Activated T-helper 1 cell treated with anti-CD3 and anti-CD28 coated beads, Interleukin-12 subunit alpha, Interleukin-12 subunit beta, Interleukin-2, Interleukin-4 antibody, amounts not matched to agents 30 ng/mL and 10 ng/mL and 1 ng/mL, durations not matched to agents 14 hours and 24 hours and 36 hours (primary cell): ENCODE measurements at regions of chr2 and their contacts with region 1.

Region 1: GRCh38 chr2:233854241-233854981 is at the start of gene HJURP:
- DNase-seq: peak; percentile 95
- H3K4me3 Mint-ChIP-seq: peak within 1 kb of the TSS; percentile 94
- H3K27ac Mint-ChIP-seq: peak within 1 kb of the TSS; percentile 97
- H3K4me1 Mint-ChIP-seq: peaks cover 63% of the 10 kb centered on the region
- H3K27me3 Mint-ChIP-seq: no peaks in the 10 kb centered on the region
- total RNA-seq, gene HJURP: 38.2 and 40.4 TPM in 2 replicates

Region 2: GRCh38 chr2:232550354-232551249 is 1303.8 kb before region 1 on chr2 and contains the starts of genes EIF4E2 and TIGD1:
- intact Hi-C with region 1: loop called (anchors 10 kb)
- DNase-seq: peak; percentile 90
- H3K4me3 Mint-ChIP-seq: peak within 1 kb of the TSS; percentile 100
- H3K27ac Mint-ChIP-seq: peak within 1 kb of the TSS; percentile 100
- H3K4me1 Mint-ChIP-seq: peaks cover 76% of the 10 kb centered on the region
- H3K27me3 Mint-ChIP-seq: no peaks in the 10 kb centered on the region
- total RNA-seq, gene EIF4E2: 94.3 and 96.2 TPM in 2 replicates
- total RNA-seq, gene TIGD1: 8.4 and 8.9 TPM in 2 replicates

Region 3: DNA sequence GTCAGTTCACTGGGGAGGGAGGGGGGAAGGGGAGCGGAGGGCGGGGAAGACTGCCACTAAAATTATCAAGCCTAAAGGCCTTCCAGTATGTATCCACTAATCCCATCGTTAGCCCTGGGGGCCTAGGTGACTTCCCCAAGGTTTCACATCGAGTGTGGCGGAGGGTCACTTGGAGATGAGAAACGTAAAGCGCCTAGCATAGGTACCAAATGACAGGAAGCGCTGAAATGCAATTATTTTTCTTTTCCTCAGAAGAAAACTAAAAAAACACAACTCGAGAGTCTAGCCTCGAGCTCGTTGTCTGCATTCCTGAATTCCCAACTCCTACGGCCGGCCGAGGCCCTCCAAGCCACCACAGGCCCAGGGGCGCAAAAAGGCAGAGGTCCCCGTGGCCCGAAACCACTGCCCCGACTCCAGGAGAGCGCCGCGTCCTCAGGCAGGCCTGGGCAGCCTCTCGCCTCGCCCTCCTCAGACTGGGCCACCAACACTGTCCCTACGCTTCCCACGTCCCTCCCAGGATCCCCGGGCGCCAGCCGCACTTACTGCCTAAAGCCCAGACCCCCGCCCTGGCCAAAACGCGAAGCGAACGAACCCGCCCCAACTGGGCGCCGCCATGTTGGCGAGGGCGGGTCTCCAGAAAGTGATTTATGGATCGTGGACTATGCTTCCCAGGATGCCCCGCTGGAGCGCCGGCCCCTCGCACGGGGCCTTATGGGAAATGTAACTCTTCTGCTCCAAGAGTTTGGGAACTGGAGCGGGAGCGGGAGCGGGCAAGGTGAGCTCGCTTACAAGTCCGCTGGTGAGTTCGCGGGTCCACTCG is 288.1 kb before region 1 on chr2 and contains the start of gene USP40:
- intact Hi-C with region 1: loop called (anchors 5 kb)
- DNase-seq: peak; percentile 37
- H3K4me3 Mint-ChIP-seq: peak within 1 kb of the TSS; percentile 94
- H3K27ac Mint-ChIP-seq: peak within 1 kb of the TSS; percentile 93
- H3K4me1 Mint-ChIP-seq: peaks cover 19% of the 10 kb centered on the region
- H3K27me3 Mint-ChIP-seq: peaks cover 20% of the 10 kb centered on the region
- total RNA-seq, gene USP40: 10.1 and 11.2 TPM in 2 replicates

Region 4: GRCh38 chr2:233990261-233990798 is 135.9 kb after region 1 on chr2:
- intact Hi-C with region 1: loop called (anchors 5 kb)
- DNase-seq: peak; percentile 69
- H3K4me3 Mint-ChIP-seq: peak overlapping the region; percentile 38
- H3K27ac Mint-ChIP-seq: no peak overlapping the region
- H3K4me1 Mint-ChIP-seq: peaks cover 49% of the 10 kb centered on the region
- H3K27me3 Mint-ChIP-seq: peaks cover 27% of the 10 kb centered on the region

Region 5: DNA sequence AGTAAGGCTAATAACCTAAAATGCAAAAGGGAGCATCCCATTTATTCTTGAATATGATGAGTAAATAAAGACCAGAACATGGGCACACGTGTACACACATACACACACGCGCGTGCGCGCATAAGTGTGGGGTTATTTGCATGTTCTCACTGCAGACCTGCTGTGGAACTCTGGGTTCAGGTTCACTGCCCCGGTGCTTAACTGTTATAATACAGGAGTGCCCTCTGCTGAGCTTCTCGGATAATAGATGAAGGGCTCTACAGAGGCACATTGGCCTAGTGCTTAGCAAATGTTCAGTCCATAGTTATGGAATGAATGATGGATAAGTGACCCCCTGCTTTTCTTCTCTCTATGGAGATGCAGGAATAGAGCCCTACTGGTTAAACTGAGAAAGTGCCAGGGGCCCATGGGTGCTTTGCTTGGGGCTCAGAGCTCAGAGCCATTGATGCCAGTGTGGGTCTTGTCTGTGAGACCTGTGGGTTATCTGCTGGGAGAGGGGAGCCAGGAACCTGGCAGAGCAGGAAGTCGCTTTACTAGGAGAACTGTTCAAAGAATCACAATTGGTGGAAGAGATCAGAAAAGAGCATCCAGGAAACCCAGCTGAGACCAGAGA is 646.1 kb after region 1 on chr2:
- intact Hi-C with region 1: loop called (anchors 1 kb)
- DNase-seq: peak; percentile 72
- H3K4me3 Mint-ChIP-seq: peak overlapping the region; percentile 58
- H3K27ac Mint-ChIP-seq: peak overlapping the region; percentile 34
- H3K4me1 Mint-ChIP-seq: peaks cover 32% of the 10 kb centered on the region
- H3K27me3 Mint-ChIP-seq: peaks cover 13% of the 10 kb centered on the region